ENCODE measurements at regions of chr22 and their contacts with region 1.

Region 1: DNA sequence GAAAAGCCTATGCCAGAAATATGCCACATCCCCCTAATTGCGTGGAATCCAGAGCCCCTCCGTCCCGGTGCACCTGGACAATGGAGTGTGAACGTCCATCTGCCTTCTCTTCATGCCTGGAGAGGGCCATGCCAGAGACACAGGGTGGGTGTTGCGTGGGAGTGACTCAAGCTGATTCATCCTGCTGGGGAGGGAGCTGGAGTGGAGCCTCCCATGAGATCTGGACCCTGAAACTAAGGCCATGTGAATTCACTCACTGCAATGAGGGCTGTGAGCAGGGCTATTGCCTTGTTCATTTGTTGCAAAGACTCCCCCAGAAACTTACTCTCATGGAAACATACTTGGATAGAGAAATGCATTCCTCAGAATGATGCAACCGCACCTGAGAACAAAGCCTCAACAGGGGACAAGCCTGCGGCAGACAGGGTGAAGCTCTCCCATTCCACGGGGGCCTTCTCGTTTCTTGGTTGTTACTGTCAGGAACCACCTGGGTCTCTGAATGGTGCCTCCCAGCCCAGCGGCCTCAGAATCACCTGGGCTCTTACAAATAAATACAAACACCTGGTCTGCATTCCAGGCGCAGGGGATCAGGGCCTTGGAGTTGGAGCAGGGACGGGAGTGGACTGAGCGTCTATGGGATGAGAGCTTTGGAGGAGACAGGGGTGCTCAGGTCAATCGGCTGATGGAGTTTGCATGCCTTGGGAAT is 1031.2 kb downstream of the BRD1 start:
- DNase-seq: no peak
- H3K4me3 ChIP-seq: no peak overlapping the region
- H3K27ac ChIP-seq: no peak overlapping the region
- H3K4me1 ChIP-seq: no peaks in the 10 kb centered on the region
- H3K27me3 ChIP-seq: no peaks in the 10 kb centered on the region
- CTCF ChIP-seq: no peak

Region 2: GRCh38 chr22:48743601-48744282 is 52.7 kb before region 1 on chr22:
- intact Hi-C with region 1: loop called (anchors 10 kb)
- DNase-seq: peak; percentile 4 to 53
- H3K4me3 ChIP-seq: no peak overlapping the region
- H3K27ac ChIP-seq: no peak overlapping the region
- H3K4me1 ChIP-seq: no peaks in the 10 kb centered on the region
- H3K27me3 ChIP-seq: no peaks in the 10 kb centered on the region
- CTCF ChIP-seq: no peak

Measured in ascending aorta (tissue), 2 donors.